ENCODE measurements at regions of chr17 and their contacts with region 1.

Region 1: DNA sequence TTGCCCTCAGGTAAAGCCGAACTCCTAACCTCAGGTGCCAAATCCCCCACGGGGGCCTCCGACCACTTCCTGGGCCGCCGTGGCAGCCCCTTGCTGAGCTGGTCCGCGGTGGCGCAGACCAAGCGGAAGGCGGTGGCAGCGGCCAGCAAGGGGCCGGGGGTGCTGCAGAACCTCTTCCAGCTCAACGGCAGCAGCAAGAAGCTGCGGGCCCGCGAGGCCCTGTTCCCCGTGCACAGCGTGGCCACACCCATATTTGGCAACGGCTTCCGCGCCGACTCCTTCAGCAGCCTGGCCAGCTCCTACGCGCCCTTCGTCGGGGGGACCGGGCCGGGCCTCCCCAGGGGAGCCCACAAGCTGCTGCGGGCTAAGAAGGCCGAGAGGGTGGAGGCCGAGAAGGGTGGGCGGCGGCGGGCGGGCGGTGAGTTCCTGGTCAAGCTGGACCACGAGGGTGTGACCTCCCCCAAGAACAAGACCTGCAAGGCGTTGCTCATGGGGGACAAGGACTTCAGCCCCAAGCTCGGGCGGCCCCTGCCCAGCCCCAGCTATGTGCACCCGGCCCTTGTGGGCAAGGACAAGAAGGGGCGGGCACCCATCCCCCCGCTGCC is 51.6 kb downstream of the ACTG1 start:
- DNase-seq: no peak
- H3K4me3 ChIP-seq: no peak overlapping the region
- H3K27ac ChIP-seq: no peak overlapping the region
- H3K4me1 ChIP-seq: peaks cover 0 to 14% (median 8%) of the 10 kb centered on the region in 4 experiments; a peak in 6 of 7 replicates
- H3K27me3 ChIP-seq: no peaks in the 10 kb centered on the region
- CTCF ChIP-seq: no peak
- EP300 ChIP-seq: no peak
- POLR2A ChIP-seq: no peak
- RAD21 ChIP-seq: no peak

Region 2: GRCh38 chr17:81445642-81446503 is 15.1 kb before region 1 on chr17:
- CTCF ChIA-PET with region 1: interaction called, 39 read pairs
- POLR2A ChIA-PET with region 1: interaction called, 3 read pairs
- DNase-seq: no peak
- H3K4me3 ChIP-seq: no peak overlapping the region
- H3K27ac ChIP-seq: no peak overlapping the region
- H3K4me1 ChIP-seq: no peaks in the 10 kb centered on the region; a peak in 2 of 7 replicates
- H3K27me3 ChIP-seq: no peaks in the 10 kb centered on the region
- CTCF ChIP-seq: peak; percentile 45 to 57 (median 51)
- EP300 ChIP-seq: no peak
- POLR2A ChIP-seq: no peak
- RAD21 ChIP-seq: peak in 1 of 2 experiments; percentile 17; a peak in 1 of 4 replicates

Region 3: GRCh38 chr17:81651692-81652091 is 190.7 kb after region 1 on chr17:
- CTCF ChIA-PET with region 1: no interaction called
- POLR2A ChIA-PET with region 1: no interaction called
- DNase-seq: no peak
- H3K4me3 ChIP-seq: no peak overlapping the region
- H3K27ac ChIP-seq: no peak overlapping the region
- H3K4me1 ChIP-seq: peaks cover 0 to 24% (median 8%) of the 10 kb centered on the region in 4 experiments; a peak in 6 of 7 replicates
- H3K27me3 ChIP-seq: peaks cover 2 to 15% (median 9%) of the 10 kb centered on the region in 4 experiments; a peak in 5 of 7 replicates
- CTCF ChIP-seq: no peak
- EP300 ChIP-seq: no peak
- POLR2A ChIP-seq: no peak
- RAD21 ChIP-seq: no peak